GM13976 (cell line): ENCODE measurements at regions of chr11 and their contacts with region 1.

Region 1: GRCh38 chr11:64566042-64566914 is 24.7 kb upstream of the SLC22A12 start:
- DNase-seq: no peak
- CTCF ChIP-seq: no peak

Region 2: GRCh38 chr11:64619811-64620380 is 53.6 kb after region 1 on chr11:
- in situ Hi-C with region 1: loop called (anchors 10 kb)
- DNase-seq: no peak
- CTCF ChIP-seq: no peak